MCF 10A (cell line): ENCODE measurements at regions of chr2 and their contacts with region 1.

Region 1: GRCh38 chr2:231713730-231714430 is 5.6 kb downstream of the PTMA start:
- DNase-seq: peak; percentile 94
- H3K4me3 Mint-ChIP-seq: no peak overlapping the region
- H3K27ac Mint-ChIP-seq: peak overlapping the region; percentile 49
- H3K4me1 Mint-ChIP-seq: peaks cover 31% of the 10 kb centered on the region
- H3K27me3 Mint-ChIP-seq: no peaks in the 10 kb centered on the region
- CTCF ChIP-seq: peak; percentile 91

Region 2: GRCh38 chr2:231604685-231605606 is 108.9 kb before region 1 on chr2:
- CTCF ChIA-PET with region 1: interaction called, 60 read pairs
- POLR2A ChIA-PET with region 1: interaction called, 4 read pairs
- intact Hi-C with region 1: no loop called
- DNase-seq: peak; percentile 96
- H3K4me3 Mint-ChIP-seq: peak overlapping the region; percentile 60
- H3K27ac Mint-ChIP-seq: peak overlapping the region; percentile 92
- H3K4me1 Mint-ChIP-seq: peaks cover 11% of the 10 kb centered on the region
- H3K27me3 Mint-ChIP-seq: no peaks in the 10 kb centered on the region
- CTCF ChIP-seq: no peak

Region 3: GRCh38 chr2:231648587-231649174 is 65.2 kb before region 1 on chr2:
- CTCF ChIA-PET with region 1: interaction called, 45 read pairs
- POLR2A ChIA-PET with region 1: interaction called, 11 read pairs
- intact Hi-C with region 1: loop called (anchors 1 kb)
- DNase-seq: peak; percentile 86
- H3K4me3 Mint-ChIP-seq: no peak overlapping the region
- H3K27ac Mint-ChIP-seq: no peak overlapping the region
- H3K4me1 Mint-ChIP-seq: peaks cover 16% of the 10 kb centered on the region
- H3K27me3 Mint-ChIP-seq: no peaks in the 10 kb centered on the region
- CTCF ChIP-seq: peak; percentile 73

Region 4: GRCh38 chr2:231680992-231681853 is 32.7 kb before region 1 on chr2:
- CTCF ChIA-PET with region 1: interaction called, 352 read pairs
- POLR2A ChIA-PET with region 1: interaction called, 28 read pairs
- intact Hi-C with region 1: loop called (anchors 1 kb)
- DNase-seq: peak; percentile 72
- H3K4me3 Mint-ChIP-seq: peak overlapping the region; percentile 66
- H3K27ac Mint-ChIP-seq: peak overlapping the region; percentile 69
- H3K4me1 Mint-ChIP-seq: peaks cover 9% of the 10 kb centered on the region
- H3K27me3 Mint-ChIP-seq: no peaks in the 10 kb centered on the region
- CTCF ChIP-seq: no peak

Region 5: DNA sequence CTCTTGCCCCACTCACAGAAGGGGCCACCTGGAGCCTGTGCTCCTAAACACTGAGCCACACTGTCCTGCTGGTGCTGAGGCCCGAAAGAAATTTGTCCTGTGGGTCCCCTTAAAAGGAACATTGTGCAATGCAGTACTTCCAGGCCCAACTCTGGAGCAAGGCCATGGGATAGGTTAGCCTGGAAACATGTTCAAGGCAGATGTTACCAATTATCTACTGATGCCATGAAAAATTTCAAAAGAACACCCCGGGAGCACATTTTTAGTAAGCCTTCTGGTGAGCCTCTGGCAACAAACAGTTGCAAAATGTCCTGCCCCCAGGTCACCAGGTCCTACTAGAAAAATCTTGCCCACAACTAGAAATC is 17.9 kb before region 1 on chr2:
- CTCF ChIA-PET with region 1: interaction called, 15 read pairs
- POLR2A ChIA-PET with region 1: interaction called, 11 read pairs
- intact Hi-C with region 1: no loop called
- DNase-seq: peak; percentile 41
- H3K4me3 Mint-ChIP-seq: no peak overlapping the region
- H3K27ac Mint-ChIP-seq: no peak overlapping the region
- H3K4me1 Mint-ChIP-seq: no peaks in the 10 kb centered on the region
- H3K27me3 Mint-ChIP-seq: no peaks in the 10 kb centered on the region
- CTCF ChIP-seq: no peak

Region 6: GRCh38 chr2:231727621-231728020 is 13.7 kb after region 1 on chr2:
- CTCF ChIA-PET with region 1: interaction called, 31 read pairs
- POLR2A ChIA-PET with region 1: interaction called, 4 read pairs
- intact Hi-C with region 1: no loop called
- DNase-seq: no peak
- H3K4me3 Mint-ChIP-seq: no peak overlapping the region
- H3K27ac Mint-ChIP-seq: no peak overlapping the region
- H3K4me1 Mint-ChIP-seq: no peaks in the 10 kb centered on the region
- H3K27me3 Mint-ChIP-seq: no peaks in the 10 kb centered on the region
- CTCF ChIP-seq: no peak